IMR-90 (cell line): ENCODE measurements at regions of chr7 and their contacts with region 1.

Region 1: DNA sequence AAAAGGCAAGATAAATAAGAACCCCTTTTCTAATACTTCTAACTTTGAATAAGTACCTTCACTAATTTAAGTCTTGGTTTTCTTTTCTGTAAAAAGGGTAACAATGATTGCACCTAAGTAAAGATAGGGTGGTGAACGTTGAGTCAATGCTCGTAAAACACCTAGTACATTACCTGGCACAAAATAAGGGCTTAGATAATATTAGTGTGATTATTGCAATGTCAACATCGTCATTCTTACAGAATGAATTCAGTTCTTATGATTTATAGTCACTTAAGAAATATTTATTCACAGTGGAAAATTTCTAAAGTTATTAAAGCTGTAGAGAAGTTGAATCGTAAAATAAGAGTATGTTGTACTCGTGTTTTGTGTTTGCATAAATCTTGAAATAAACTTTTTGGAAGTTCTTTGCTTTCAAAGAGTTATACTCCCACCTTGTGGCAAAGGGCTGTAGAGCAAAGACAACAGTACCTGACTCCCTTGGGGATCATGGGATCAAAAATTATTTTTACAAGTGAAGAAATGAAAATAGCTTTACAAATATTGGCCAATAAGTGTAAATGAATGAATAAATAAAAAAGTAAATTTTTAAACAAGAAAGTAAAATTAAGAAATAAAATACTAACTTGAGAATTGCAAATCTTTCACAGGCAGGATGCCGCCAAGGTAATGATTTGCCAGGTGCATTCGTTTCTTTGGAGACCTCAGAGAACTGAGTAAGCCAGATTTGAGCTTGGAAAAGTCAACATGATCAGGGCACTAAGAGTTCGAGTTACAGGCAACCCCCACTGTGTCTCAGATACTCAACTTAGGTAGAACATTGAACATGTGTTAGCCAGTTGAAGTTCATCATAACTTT is 285.8 kb upstream of the CACNA2D1 start:
- DNase-seq: peak; percentile 60
- ATAC-seq: peak; percentile 76
- H3K4me3 ChIP-seq: no peak overlapping the region
- H3K27ac ChIP-seq: no peak overlapping the region
- H3K4me1 ChIP-seq: 0 out of 2 replicates have a peak, but pooled peaks cover 2% of the 10 kb centered on the region
- H3K27me3 ChIP-seq: no peaks in the 10 kb centered on the region
- CTCF ChIP-seq: peak; percentile 86
- POLR2A ChIP-seq: no peak
- RAD21 ChIP-seq: peak; percentile 83

Region 2: GRCh38 chr7:81482600-81483186 is 1246.7 kb before region 1 on chr7:
- CTCF ChIA-PET with region 1: no interaction called
- POLR2A ChIA-PET with region 1: no interaction called
- dilution Hi-C with region 1: no loop called
- in situ Hi-C with region 1: no loop called
- intact Hi-C with region 1: loop called (anchors 5 kb)
- DNase-seq: peak; percentile 65
- ATAC-seq: peak; percentile 50
- H3K4me3 ChIP-seq: no peak overlapping the region
- H3K27ac ChIP-seq: no peak overlapping the region
- H3K4me1 ChIP-seq: peaks cover 3% of the 10 kb centered on the region
- H3K27me3 ChIP-seq: no peaks in the 10 kb centered on the region
- CTCF ChIP-seq: peak; percentile 62
- POLR2A ChIP-seq: no peak
- RAD21 ChIP-seq: peak; percentile 67

Region 3: DNA sequence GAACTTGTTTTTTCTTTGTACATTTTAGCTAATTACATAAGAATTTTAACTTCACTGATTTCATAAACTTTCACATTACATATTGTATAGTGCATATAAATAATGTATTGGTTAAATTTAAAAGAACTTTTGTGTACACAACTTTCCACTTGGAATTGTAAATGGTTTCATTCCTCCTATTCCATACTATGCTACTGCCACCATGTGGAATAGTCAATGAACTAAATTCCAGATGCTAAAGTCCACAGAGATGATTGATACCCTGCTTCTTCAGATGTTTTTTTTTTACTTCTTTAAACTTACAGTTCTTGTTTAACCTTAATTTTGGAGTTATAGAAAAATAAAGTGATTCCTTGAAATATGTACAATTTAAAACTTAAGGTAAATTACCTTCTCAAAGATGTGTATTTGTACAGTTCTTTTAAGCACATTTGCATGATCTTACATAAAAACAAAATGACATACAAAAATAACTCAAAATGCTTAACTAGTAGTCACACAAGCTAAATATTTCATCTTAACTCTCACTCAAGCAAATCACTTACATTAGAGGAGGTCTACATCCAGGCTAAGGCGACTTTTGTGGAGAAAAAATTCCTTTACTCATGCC is 712.0 kb before region 1 on chr7:
- CTCF ChIA-PET with region 1: no interaction called
- POLR2A ChIA-PET with region 1: no interaction called
- dilution Hi-C with region 1: no loop called
- in situ Hi-C with region 1: no loop called
- intact Hi-C with region 1: loop called (anchors 2 kb)
- DNase-seq: peak; percentile 65
- ATAC-seq: peak; percentile 71
- H3K4me3 ChIP-seq: no peak overlapping the region
- H3K27ac ChIP-seq: no peak overlapping the region
- H3K4me1 ChIP-seq: peaks cover 4% of the 10 kb centered on the region
- H3K27me3 ChIP-seq: no peaks in the 10 kb centered on the region
- CTCF ChIP-seq: peak; percentile 75
- POLR2A ChIP-seq: no peak
- RAD21 ChIP-seq: peak; percentile 82

Region 4: DNA sequence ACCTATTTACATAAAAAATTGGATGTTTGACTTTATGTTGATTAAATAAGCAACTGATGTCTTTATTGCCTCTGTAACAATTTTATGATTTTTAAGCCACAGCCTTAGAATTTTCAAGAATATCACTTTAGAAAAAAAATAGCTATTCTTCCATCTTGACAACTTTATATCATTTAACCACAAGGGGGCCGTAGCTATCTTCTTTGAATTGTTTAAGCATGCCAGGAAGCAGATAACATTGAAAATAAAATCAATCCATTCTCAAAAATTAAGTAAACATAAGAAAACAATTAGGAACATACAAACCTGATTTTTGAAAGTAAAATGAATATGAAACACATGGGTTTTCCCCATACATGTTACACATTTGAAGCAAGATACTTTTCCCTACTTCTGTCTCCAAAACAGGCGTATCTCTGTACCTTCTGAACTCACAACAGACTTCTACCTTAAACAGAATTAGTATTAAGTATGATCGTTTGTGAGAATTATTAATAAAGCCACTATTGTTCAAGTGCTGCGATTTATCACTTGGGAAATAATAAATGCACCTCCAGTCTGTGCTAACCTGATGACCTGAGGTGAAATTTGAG is 494.8 kb before region 1 on chr7:
- CTCF ChIA-PET with region 1: interaction called, 4 read pairs
- POLR2A ChIA-PET with region 1: no interaction called
- dilution Hi-C with region 1: no loop called
- in situ Hi-C with region 1: loop called (anchors 10 kb)
- intact Hi-C with region 1: loop called (anchors 5 kb)
- DNase-seq: peak; percentile 59
- ATAC-seq: no peak; the same call in 1 of the 2 replicates
- H3K4me3 ChIP-seq: no peak overlapping the region
- H3K27ac ChIP-seq: no peak overlapping the region
- H3K4me1 ChIP-seq: 0 out of 2 replicates have a peak, but pooled peaks cover 1% of the 10 kb centered on the region
- H3K27me3 ChIP-seq: no peaks in the 10 kb centered on the region
- CTCF ChIP-seq: peak; percentile 75
- POLR2A ChIP-seq: no peak
- RAD21 ChIP-seq: peak; percentile 75

Region 5: DNA sequence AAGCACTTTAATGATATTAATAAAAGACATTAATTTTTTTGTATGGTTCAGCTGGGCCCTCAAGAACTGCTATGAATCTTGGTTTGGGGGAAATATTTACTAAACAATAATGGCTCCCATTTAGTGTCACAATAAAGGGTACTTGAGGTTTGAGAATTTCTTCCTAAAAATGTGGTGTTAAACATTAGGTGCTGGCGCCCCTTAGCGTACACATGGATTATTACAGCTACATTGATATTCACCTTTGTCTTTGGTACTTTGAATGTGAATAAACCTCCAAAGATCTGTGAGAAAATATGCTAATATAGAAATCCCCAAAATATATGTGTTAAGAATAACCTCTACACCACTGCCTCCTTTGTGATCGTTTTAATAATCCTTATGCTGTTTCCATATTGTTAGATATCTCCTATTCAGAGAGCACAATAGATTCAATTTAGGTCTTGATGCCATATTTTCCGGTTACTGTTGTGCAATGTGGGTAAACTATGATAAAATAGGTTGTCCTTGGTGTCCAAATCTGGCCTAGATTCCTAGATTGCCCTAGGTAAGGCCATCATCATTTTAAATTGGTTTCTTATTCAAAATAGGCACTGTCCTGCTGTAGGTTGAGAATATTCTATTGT is 124.0 kb before region 1 on chr7:
- CTCF ChIA-PET with region 1: no interaction called
- POLR2A ChIA-PET with region 1: no interaction called
- dilution Hi-C with region 1: no loop called
- in situ Hi-C with region 1: loop called (anchors 10 kb)
- intact Hi-C with region 1: loop called (anchors 2 kb)
- DNase-seq: peak; percentile 46
- ATAC-seq: peak; percentile 80
- H3K4me3 ChIP-seq: no peak overlapping the region
- H3K27ac ChIP-seq: no peak overlapping the region
- H3K4me1 ChIP-seq: no peaks in the 10 kb centered on the region
- H3K27me3 ChIP-seq: no peaks in the 10 kb centered on the region
- CTCF ChIP-seq: peak; percentile 81
- POLR2A ChIP-seq: no peak
- RAD21 ChIP-seq: peak; percentile 81